Thyroid gland (tissue), 4 donors: ENCODE measurements at regions of chr18 and their contacts with region 1.

Region 1: DNA sequence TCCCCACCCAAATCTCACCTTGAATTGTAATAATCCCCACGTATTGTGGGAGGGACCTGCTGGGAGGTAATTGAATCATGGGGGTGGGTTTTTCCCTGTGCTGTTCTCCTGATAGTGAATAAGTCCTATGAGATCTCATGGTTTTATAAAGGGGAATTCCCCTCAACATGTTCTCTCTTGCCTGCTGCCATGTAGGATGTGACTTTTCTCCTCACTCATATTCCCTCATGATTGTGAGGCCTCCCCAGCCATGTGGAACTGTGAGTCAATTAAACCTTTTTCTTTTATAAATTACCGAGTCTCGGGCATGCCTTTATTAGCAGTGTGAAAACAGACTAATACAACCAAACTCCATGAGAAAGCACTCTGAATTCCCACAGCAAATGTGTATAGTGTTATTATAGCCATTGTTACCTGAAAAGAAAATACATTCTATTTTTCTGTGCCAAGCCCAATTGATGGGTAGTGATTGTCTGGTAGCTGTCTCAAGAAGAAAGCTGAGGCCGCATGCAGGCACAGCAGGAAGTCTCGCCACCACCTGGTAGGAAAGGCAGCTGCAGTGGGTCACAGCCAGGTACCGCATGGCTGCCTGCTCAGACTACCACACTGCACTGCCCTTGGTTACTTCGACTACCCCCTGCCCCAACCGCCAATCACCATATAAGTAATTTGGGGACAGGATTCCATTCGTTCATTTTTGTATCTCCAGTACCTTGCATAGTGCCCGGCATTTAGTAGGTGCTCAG is 10.3 kb upstream of the ZBTB7C start:
- DNase-seq: no peak
- H3K4me3 ChIP-seq: no peak overlapping the region
- H3K27ac ChIP-seq: no peak overlapping the region
- H3K4me1 ChIP-seq: peaks cover 0 to 11% of the 10 kb centered on the region in 2 donors
- H3K27me3 ChIP-seq: no peaks in the 10 kb centered on the region
- CTCF ChIP-seq: no peak
- POLR2A ChIP-seq: no peak

Region 2: GRCh38 chr18:48037481-48038271 is 381.8 kb before region 1 on chr18:
- intact Hi-C with region 1: loop called (anchors 5 kb)
- DNase-seq: peak; percentile 76 to 80
- H3K4me3 ChIP-seq: no peak overlapping the region
- H3K27ac ChIP-seq: peak overlapping the region; percentile 81 to 90 (median 85)
- H3K4me1 ChIP-seq: peaks cover 48 to 61% of the 10 kb centered on the region in 2 donors
- H3K27me3 ChIP-seq: no peaks in the 10 kb centered on the region
- CTCF ChIP-seq: peak in 4 of 6 experiments; percentile 47 to 63 (median 58)
- POLR2A ChIP-seq: no peak